Activated CD4-positive, alpha-beta T cell treated with anti-CD3 and anti-CD28 coated beads for 36 hours (primary cell): ENCODE measurements at regions of chr3 and their contacts with region 1.

Region 1: GRCh38 chr3:101695779-101696372 is 9.4 kb upstream of the RPL24 start:
- DNase-seq: peak; percentile 48
- ATAC-seq: no peak
- H3K4me3 Mint-ChIP-seq: no peak overlapping the region
- H3K27ac Mint-ChIP-seq: no peak overlapping the region
- H3K4me1 Mint-ChIP-seq: peaks cover 7% of the 10 kb centered on the region
- H3K27me3 Mint-ChIP-seq: no peaks in the 10 kb centered on the region

Region 2: DNA sequence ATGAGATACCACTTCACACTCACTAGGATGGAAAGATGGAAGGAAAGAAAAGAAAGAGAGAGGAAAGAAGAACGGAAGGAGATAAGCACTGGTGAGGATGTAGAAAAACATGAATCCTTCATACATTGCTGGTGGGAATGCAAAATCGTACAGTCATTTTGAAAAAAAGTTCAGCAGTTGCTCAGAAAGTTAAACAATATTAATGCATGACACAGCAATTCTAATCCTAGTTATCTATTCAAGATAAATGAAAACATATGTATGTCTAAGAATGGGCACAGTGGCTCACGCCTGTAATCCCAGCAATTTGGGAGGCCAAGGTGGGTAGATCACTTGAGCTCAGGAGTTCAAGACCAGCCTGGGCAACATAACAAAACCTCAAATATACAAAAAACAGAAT is 241.9 kb before region 1 on chr3:
- CTCF ChIA-PET with region 1: no interaction called
- POLR2A ChIA-PET with region 1: no interaction called
- intact Hi-C with region 1: no loop called
- DNase-seq: no peak
- ATAC-seq: no peak
- H3K4me3 Mint-ChIP-seq: no peak overlapping the region
- H3K27ac Mint-ChIP-seq: no peak overlapping the region
- H3K4me1 Mint-ChIP-seq: peaks cover 17% of the 10 kb centered on the region
- H3K27me3 Mint-ChIP-seq: no peaks in the 10 kb centered on the region

Region 3: DNA sequence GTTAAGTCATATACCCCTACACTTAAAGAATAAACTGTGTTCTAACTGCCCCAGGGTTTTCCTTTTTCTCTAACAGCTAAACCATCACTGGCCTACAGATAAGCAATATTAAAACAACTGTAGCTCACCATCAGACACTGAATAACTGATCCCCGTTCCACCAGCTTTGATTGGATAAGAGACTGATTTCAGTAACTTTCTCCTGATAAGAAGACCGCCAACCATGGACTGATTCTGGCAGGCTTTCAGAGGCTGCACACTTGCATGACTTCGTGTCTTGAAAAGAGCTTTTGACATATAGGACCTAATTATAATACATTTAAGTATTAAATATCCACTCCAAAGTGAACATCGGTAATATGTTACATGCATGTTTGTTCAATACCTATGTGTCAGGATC is 13.2 kb after region 1 on chr3:
- CTCF ChIA-PET with region 1: interaction called, 15 read pairs
- POLR2A ChIA-PET with region 1: no interaction called
- intact Hi-C with region 1: no loop called
- DNase-seq: no peak
- ATAC-seq: no peak
- H3K4me3 Mint-ChIP-seq: no peak overlapping the region
- H3K27ac Mint-ChIP-seq: no peak overlapping the region
- H3K4me1 Mint-ChIP-seq: no peaks in the 10 kb centered on the region
- H3K27me3 Mint-ChIP-seq: no peaks in the 10 kb centered on the region

Region 4: GRCh38 chr3:101803173-101803782 is 107.4 kb after region 1 on chr3:
- CTCF ChIA-PET with region 1: no interaction called
- POLR2A ChIA-PET with region 1: no interaction called
- intact Hi-C with region 1: loop called (anchors 1 to 5 kb)
- DNase-seq: peak; percentile 68
- ATAC-seq: peak; percentile 99
- H3K4me3 Mint-ChIP-seq: no peak overlapping the region
- H3K27ac Mint-ChIP-seq: no peak overlapping the region
- H3K4me1 Mint-ChIP-seq: peaks cover 36% of the 10 kb centered on the region
- H3K27me3 Mint-ChIP-seq: no peaks in the 10 kb centered on the region